Activated CD4-positive, alpha-beta memory T cell treated with anti-CD3 and anti-CD28 coated beads for 36 hours (primary cell): ENCODE measurements at regions of chr13 and their contacts with region 1.

Region 1: DNA sequence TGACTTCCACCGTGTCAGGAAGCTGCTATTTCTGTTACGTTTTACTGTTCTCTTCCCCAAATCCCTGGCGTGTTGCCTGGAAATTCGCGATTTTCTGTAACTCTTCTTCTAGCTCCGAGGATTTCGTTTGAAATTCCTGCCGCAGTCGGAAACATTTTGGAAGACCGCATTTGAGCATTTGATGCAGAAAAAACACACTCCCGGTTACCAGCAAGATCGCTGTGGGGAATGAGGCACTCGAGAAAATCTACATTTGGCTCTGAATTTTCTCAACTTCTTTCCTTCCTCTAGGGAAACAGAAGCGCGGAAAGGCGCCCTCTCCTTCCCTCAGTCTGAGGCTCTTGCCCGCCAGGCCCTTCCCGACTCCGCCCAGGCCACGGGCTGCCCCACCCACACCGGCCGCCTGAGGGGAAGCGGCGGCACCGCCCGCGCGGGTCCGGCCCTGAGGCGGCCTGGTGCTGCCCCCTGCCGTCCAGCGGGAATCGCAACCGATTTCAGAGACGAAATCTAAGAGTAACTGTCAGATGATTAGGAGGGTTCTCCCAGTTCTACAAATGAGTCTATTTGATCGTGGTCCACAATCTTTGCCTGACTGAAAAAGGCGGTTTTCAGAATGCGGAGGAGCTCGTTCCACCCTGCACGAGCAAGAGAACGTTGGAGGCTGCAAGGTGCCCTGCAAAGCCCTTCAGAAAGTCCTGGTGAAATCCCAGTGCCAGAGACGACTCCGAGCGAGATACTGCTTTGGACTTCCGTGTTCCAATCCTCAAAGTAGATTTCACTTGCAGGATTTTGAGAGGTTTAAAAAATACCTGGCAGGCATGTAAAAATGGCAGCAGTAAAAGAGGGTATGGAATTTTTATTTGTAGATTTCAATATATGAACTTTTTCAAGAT is 18.4 kb upstream of the TUBGCP3 start:
- DNase-seq: peak; percentile 93
- H3K4me3 Mint-ChIP-seq: peak overlapping the region; percentile 72
- H3K27ac Mint-ChIP-seq: no peak overlapping the region
- H3K4me1 Mint-ChIP-seq: peaks cover 6% of the 10 kb centered on the region
- H3K27me3 Mint-ChIP-seq: peaks cover 10% of the 10 kb centered on the region

Region 2: DNA sequence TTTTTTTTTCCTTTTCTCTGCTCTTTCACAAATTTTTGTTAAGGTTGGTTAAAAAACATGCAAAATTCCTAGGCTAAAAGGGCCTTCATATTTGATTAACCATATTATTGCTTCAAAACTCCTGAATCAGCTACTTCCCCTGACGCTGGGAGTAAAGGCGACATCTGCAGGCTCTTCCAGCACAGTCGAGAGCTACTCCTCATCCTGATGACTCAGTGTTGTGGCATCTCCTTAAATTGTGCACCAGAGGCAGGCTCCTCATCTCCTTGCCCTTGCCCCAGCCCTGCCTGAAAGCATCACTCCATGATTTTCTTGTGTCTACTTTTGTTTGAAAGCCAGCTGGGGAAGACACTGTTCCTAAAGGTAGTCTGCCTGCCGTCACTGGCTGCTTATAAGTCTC is 563.9 kb before region 1 on chr13:
- CTCF ChIA-PET with region 1: no interaction called
- POLR2A ChIA-PET with region 1: no interaction called
- intact Hi-C with region 1: no loop called
- DNase-seq: no peak
- H3K4me3 Mint-ChIP-seq: no peak overlapping the region
- H3K27ac Mint-ChIP-seq: no peak overlapping the region
- H3K4me1 Mint-ChIP-seq: no peaks in the 10 kb centered on the region
- H3K27me3 Mint-ChIP-seq: peaks cover 15% of the 10 kb centered on the region

Region 3: DNA sequence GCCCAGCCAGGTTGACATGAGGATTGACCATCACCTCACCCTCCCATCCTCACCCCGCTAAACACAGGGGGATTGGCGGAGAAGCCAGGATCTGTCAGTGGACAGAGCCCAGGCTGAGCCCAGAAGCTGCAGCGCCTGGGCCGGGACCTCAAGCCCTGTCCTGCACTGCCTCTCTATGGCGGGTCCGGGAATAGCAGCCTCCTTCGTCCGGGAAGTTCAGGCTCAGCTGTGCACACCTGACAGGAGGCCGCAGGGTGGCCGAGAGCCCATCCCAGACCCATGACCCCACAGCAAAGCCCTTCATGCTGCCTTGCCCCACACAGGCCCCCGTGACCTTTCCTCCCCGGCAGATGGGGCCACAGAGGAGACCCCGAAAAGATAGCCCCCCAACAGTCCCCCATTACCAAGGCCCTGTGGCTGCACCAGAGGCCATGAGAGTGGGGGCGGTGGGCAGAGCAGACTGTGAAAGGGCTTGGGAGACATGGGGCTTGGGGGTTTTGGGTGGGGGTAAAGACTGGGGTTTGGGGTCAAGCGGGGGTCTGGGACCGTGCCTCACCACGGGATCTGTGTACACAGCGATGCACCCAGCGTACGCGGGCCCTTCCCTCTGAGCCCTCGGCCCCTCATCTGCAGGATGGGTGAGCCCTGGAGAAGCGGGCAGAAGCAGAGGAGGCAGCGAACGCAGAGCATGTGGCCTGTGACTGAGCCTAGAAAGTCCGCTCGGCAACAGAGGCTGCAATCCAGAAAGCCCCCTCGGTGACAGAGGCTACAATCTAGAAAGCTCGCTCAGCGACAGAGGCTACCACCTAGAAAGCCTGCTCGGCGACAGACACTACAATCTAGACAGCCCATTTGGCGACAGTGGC is 162.1 kb before region 1 on chr13:
- CTCF ChIA-PET with region 1: interaction called, 11 read pairs
- POLR2A ChIA-PET with region 1: no interaction called
- intact Hi-C with region 1: loop called (anchors 5 kb)
- DNase-seq: peak; percentile 75
- H3K4me3 Mint-ChIP-seq: no peak overlapping the region
- H3K27ac Mint-ChIP-seq: no peak overlapping the region
- H3K4me1 Mint-ChIP-seq: no peaks in the 10 kb centered on the region
- H3K27me3 Mint-ChIP-seq: peaks cover 15% of the 10 kb centered on the region

Region 4: DNA sequence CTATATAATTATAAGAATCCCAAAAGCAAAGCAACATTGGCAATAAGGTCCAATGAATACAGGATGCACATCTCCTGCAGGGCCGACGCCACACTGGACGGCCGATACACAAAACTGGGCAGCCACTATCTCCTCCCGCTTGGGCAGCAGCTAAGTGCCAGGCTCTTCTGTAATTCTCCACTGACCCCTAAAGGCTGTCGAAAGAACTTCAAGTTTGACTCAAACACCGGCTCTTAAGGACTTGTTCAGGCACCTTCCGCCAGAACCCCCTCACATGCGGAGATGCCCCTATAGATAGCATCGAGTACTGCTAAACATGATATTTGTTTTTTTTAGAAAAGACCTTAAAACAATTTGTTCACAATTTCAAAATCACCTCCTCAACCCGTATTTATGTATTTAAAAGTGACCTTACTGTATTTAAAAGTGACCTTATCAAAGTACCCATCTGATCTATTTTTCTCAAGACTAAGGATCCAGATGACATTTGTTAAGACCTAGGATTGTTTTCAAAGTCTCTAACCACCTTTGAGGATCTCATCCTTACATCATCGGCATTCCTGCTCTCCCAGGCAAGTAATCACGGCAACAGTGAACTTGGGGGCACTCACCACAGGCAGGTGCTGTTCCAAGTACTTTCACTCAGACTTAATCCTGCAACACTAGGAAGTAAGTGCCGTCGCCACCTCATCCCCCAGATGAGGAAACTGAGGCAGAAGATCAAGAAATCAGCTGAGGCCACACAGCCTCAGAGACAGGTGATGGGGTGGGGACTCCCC is 96.2 kb before region 1 on chr13:
- CTCF ChIA-PET with region 1: interaction called, 6 read pairs
- POLR2A ChIA-PET with region 1: no interaction called
- intact Hi-C with region 1: loop called (anchors 5 kb)
- DNase-seq: no peak
- H3K4me3 Mint-ChIP-seq: no peak overlapping the region
- H3K27ac Mint-ChIP-seq: peak overlapping the region; percentile 58
- H3K4me1 Mint-ChIP-seq: peaks cover 2% of the 10 kb centered on the region
- H3K27me3 Mint-ChIP-seq: no peaks in the 10 kb centered on the region

Region 5: DNA sequence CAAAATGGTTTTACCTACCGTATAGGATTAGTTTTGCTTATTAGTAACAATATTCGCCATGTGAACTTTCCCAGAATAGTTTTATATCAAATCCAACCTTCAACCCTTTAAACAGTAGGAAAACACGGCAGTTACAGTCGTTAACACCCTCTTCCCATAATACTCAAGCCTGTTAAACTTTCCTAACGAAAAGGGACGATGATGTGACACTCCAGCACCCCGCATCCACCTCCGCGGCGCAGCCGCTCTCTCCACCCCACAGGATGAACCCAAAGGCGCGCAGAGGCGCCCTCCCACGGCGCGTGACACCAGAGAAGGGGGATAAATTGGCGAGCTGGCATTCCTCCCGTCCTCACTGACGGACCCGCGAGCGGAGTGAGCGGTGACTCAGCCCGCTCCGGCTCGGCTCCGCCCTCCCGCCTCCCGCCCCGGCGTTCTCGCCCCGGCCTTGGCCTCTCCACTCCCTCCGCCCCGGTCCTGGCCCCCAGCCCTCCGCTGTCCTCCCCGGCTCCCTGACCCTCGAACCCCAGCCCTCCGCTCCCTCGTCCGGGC is 19.1 kb before region 1 on chr13:
- CTCF ChIA-PET with region 1: interaction called, 12 read pairs
- POLR2A ChIA-PET with region 1: interaction called, 7 read pairs
- intact Hi-C with region 1: loop called (anchors 1 kb)
- DNase-seq: peak; percentile 85
- H3K4me3 Mint-ChIP-seq: peak overlapping the region; percentile 92
- H3K27ac Mint-ChIP-seq: peak overlapping the region; percentile 91
- H3K4me1 Mint-ChIP-seq: peaks cover 48% of the 10 kb centered on the region
- H3K27me3 Mint-ChIP-seq: no peaks in the 10 kb centered on the region

Region 6: GRCh38 chr13:112722433-112723250 is 116.3 kb after region 1 on chr13:
- CTCF ChIA-PET with region 1: no interaction called
- POLR2A ChIA-PET with region 1: no interaction called
- intact Hi-C with region 1: no loop called
- DNase-seq: no peak
- H3K4me3 Mint-ChIP-seq: no peak overlapping the region
- H3K27ac Mint-ChIP-seq: no peak overlapping the region
- H3K4me1 Mint-ChIP-seq: peaks cover 26% of the 10 kb centered on the region
- H3K27me3 Mint-ChIP-seq: no peaks in the 10 kb centered on the region